Heart left ventricle (tissue), 16 donors: ENCODE measurements at regions of chr11 and their contacts with region 1.

Region 1: DNA sequence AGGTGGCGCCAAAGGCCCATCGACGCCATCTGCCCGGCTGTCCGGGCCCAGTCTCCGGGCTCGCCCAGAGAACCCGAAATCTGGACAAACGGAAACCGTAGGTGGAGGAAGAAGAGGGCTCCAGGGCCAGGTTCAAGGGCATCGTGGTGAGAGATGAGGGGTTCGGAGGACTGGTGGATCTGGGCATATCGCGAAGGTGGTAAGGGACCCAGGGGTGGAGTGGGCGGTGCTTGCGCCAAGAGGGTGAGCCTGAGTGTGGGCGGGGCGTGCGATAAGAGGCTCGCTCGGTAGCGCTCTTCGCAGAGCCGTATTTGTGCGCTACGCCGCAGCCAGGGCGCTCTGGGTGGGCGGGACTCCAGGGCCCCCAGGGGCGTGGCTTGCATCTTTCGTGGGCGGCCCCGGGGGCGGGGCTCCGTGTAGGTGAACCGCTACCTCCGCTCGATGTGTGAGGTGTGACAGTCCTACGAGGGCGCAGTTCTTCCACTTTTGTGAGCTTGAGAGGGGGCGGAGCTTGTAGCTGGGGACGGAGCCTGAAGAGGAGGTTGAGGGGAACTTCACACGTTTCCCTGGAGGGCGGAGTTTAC is 4.8 kb downstream of the CD248 start:
- DNase-seq: peak; percentile 92 to 96 (median 93)
- ATAC-seq: peak; percentile 80 to 87 (median 82)
- H3K4me3 ChIP-seq: peak overlapping the region; percentile 18 to 66 (median 62)
- H3K27ac ChIP-seq: peak overlapping the region; percentile 53 to 94 (median 84)
- H3K4me1 ChIP-seq: peaks cover 0 to 37% (median 18%) of the 10 kb centered on the region in 12 donors
- H3K27me3 ChIP-seq: no peaks in the 10 kb centered on the region
- CTCF ChIP-seq: peak in 11 of 12 donors; percentile 9 to 98 (median 87)
- POLR2A ChIP-seq: peak in 1 of 2 donors; percentile 42

Region 2: GRCh38 chr11:66183494-66184048 is 128.5 kb before region 1 on chr11:
- intact Hi-C with region 1: no loop called
- DNase-seq: no peak
- ATAC-seq: no peak
- H3K4me3 ChIP-seq: no peak overlapping the region
- H3K27ac ChIP-seq: no peak overlapping the region
- H3K4me1 ChIP-seq: peaks cover 0 to 5% (median 0%) of the 10 kb centered on the region in 12 donors
- H3K27me3 ChIP-seq: no peaks in the 10 kb centered on the region
- CTCF ChIP-seq: no peak
- POLR2A ChIP-seq: no peak

Region 3: GRCh38 chr11:66328307-66329144 is 16.5 kb after region 1 on chr11:
- intact Hi-C with region 1: loop called in 9 of 10 experiments (anchors 1 to 2 kb)
- DNase-seq: peak; percentile 78 to 87 (median 80)
- ATAC-seq: peak; percentile 56 to 79 (median 74)
- H3K4me3 ChIP-seq: peak overlapping the region in 6 of 12 donors; percentile 1 to 28 (median 21)
- H3K27ac ChIP-seq: peak overlapping the region in 5 of 12 donors; percentile 19 to 84 (median 23)
- H3K4me1 ChIP-seq: peaks cover 4 to 37% (median 32%) of the 10 kb centered on the region in 12 donors
- H3K27me3 ChIP-seq: no peaks in the 10 kb centered on the region
- CTCF ChIP-seq: peak; percentile 92 to 98 (median 97)
- POLR2A ChIP-seq: no peak

Region 4: DNA sequence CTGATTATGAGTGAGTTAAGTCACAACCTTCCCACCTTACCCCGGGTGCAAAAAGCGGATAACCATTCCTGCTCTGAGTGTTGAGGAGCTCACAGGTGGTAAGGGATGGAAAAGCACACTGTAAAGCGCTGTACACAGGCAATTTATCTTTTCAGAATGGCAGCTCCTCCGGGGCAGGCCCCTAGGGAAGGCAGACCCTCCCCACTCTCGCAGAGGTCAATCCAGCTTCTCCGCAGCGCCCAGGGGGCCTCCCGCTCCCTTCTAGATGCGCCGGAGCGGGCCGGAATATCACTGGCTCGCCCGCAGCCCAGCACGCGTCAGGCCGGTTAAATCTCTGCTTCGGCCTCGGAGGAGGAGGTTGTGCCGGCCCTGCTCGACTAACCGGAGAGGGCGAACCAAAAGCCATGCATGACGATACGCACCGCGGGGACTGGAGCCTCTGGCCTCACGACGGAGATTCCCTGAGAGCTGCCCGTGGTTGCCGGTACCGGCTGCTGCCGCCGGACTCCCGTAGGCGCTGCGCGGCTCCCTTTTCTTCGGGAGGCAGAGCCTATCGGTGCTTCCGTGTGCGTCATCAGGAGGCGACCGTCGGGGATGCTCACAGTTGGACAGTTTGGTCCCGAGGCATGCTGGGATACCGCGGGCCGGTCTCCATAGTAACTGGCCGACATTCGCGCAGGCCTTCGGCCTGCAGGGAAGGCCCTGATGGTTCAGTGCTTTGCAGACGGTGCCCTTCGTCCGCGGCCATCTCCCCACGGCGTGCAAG is 32.7 kb after region 1 on chr11 and contains the start of gene BRMS1:
- intact Hi-C with region 1: loop called in 5 of 10 experiments (anchors 5 kb)
- DNase-seq: peak; percentile 98 to 100 (median 99)
- ATAC-seq: peak; percentile 89 to 96 (median 91)
- H3K4me3 ChIP-seq: peak within 1 kb of the TSS; percentile 84 to 100 (median 96)
- H3K27ac ChIP-seq: peak within 1 kb of the TSS in 11 of 12 donors; percentile 41 to 87 (median 80)
- H3K4me1 ChIP-seq: peaks cover 4 to 47% (median 34%) of the 10 kb centered on the region in 12 donors
- H3K27me3 ChIP-seq: no peaks in the 10 kb centered on the region
- CTCF ChIP-seq: peak in 3 of 12 donors; percentile 14 to 19 (median 17)
- POLR2A ChIP-seq: peak in 1 of 2 donors; percentile 89
- total RNA-seq, gene BRMS1: 9.7 to 39.2 (median 16.5) TPM

Region 5: GRCh38 chr11:66393954-66394353 is 81.9 kb after region 1 on chr11:
- intact Hi-C with region 1: loop called in 8 of 10 experiments (anchors 2 to 5 kb)
- DNase-seq: no peak
- ATAC-seq: no peak
- H3K4me3 ChIP-seq: no peak overlapping the region
- H3K27ac ChIP-seq: no peak overlapping the region
- H3K4me1 ChIP-seq: no peaks in the 10 kb centered on the region
- H3K27me3 ChIP-seq: peaks cover 0 to 27% (median 0%) of the 10 kb centered on the region in 9 donors
- CTCF ChIP-seq: no peak
- POLR2A ChIP-seq: no peak